ENCODE measurements at regions of chrX and their contacts with region 1.

Region 1: DNA sequence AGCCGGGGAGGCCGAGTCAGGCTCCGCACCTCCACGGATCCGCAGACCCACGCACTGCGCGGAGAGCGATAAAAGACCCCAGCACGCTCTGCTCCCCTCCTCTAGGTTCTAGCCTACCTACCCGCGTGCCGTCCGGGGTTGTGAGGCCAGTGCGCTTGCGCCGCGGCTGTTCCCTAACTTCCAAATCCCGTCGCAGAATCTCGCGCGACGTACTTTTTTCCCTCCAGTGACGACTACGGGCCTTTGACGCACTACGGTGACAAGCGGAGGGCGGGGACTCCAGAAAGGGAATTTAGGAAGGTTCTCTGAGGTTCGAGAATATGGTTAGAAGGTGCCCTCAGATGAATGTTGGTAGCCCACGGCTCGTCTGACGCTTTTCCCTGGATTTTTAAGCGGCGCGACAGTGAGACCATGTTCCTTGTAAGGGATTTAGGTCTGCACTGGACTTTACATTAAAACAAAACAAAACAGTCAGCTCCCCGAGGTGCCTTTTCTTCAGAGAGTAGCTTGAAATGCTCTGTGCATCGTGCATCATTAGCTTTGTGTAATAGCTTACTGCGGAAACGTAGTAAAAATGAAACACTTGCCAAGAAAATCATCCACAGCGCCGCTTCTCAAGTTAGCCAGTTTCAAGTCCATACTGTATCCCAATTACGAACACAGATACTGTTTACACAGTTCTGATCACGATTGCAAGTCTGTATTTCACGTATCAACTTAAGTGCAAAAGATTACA is at the start of gene NKRF:
- DNase-seq: peak; percentile 83 to 96 (median 90)
- ATAC-seq: peak; percentile 79 to 82
- H3K4me3 Mint-ChIP-seq: peak within 1 kb of the TSS; percentile 87 to 98 (median 94)
- H3K27ac Mint-ChIP-seq: peak within 1 kb of the TSS; percentile 94 to 99 (median 98)
- H3K4me1 Mint-ChIP-seq: peaks cover 12 to 48% (median 34%) of the 10 kb centered on the region in 4 donors
- H3K27me3 Mint-ChIP-seq: no peaks in the 10 kb centered on the region
- polyA plus RNA-seq, gene NKRF: 4.8 to 8.5 (median 6.8) TPM

Region 2: GRCh38 chrX:119488749-119489148 is 117.7 kb before region 1 on chrX:
- POLR2A ChIA-PET with region 1: no interaction called
- DNase-seq: peak in 9 of 10 donors; percentile 6 to 67 (median 22)
- ATAC-seq: no peak
- H3K4me3 Mint-ChIP-seq: no peak overlapping the region
- H3K27ac Mint-ChIP-seq: peak overlapping the region in 1 of 10 donors; percentile 41
- H3K4me1 Mint-ChIP-seq: peaks cover 0 to 8% (median 3%) of the 10 kb centered on the region in 4 donors
- H3K27me3 Mint-ChIP-seq: no peaks in the 10 kb centered on the region

Region 3: DNA sequence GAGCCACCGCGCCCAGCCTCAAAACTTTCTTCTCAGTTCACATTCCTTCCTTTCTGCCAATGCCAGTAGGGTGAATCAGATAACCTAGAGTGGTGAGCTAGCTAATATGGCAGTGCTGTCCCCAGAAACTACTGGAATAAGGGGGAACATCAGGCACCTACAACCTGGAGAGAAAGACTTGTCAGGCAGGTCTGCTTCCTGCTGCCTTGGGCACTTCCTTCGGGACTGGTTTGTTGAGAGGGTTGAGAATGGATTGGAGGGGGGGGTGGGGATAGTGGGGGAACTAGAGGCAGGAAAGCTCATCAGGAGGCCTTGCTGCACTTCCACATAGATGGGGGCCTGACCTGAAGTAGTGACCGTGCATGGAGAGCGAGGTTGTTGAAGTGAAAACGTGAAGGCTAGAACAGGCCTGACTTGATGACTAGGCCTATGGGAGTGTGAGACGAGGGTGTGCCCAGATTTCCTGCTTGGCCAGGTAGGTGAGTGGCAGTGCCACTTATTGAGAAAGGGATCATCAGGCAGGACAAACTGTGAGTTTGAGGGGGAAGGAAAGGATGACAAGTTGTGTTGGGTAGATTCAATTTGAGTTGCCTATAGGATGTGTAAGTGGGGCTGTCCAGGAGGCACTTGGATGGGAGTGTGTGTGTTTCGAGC is 104.8 kb before region 1 on chrX:
- POLR2A ChIA-PET with region 1: no interaction called
- DNase-seq: no peak
- ATAC-seq: no peak
- H3K4me3 Mint-ChIP-seq: no peak overlapping the region
- H3K27ac Mint-ChIP-seq: peak overlapping the region in 9 of 10 donors; percentile 6 to 95 (median 36)
- H3K4me1 Mint-ChIP-seq: peaks cover 3 to 24% (median 21%) of the 10 kb centered on the region in 4 donors
- H3K27me3 Mint-ChIP-seq: no peaks in the 10 kb centered on the region

Region 4: GRCh38 chrX:119574394-119575266 is 31.8 kb before region 1 on chrX and contains the start of gene UBE2A:
- POLR2A ChIA-PET with region 1: interaction called, 29 read pairs
- DNase-seq: peak; percentile 79 to 95 (median 86)
- ATAC-seq: peak; percentile 89 to 92
- H3K4me3 Mint-ChIP-seq: peak within 1 kb of the TSS; percentile 80 to 94 (median 88)
- H3K27ac Mint-ChIP-seq: peak within 1 kb of the TSS; percentile 77 to 97 (median 89)
- H3K4me1 Mint-ChIP-seq: peaks cover 4 to 31% (median 16%) of the 10 kb centered on the region in 4 donors
- H3K27me3 Mint-ChIP-seq: no peaks in the 10 kb centered on the region
- polyA plus RNA-seq, gene UBE2A: 31.5 to 43.5 (median 34.0) TPM

Region 5: GRCh38 chrX:119900976-119901375 is 294.5 kb after region 1 on chrX:
- POLR2A ChIA-PET with region 1: no interaction called
- DNase-seq: no peak
- ATAC-seq: no peak
- H3K4me3 Mint-ChIP-seq: no peak overlapping the region
- H3K27ac Mint-ChIP-seq: peak overlapping the region in 1 of 10 donors; percentile 26
- H3K4me1 Mint-ChIP-seq: no peaks in the 10 kb centered on the region
- H3K27me3 Mint-ChIP-seq: no peaks in the 10 kb centered on the region

Measured in naive thymus-derived CD8-positive, alpha-beta T cell (primary cell).